AG04449 (cell line): ENCODE measurements at regions of chr17 and their contacts with region 1.

Region 1: GRCh38 chr17:17812211-17813057 is 24.4 kb downstream of the SREBF1 start:
- DNase-seq: no peak
- H3K4me3 ChIP-seq: no peak overlapping the region
- CTCF ChIP-seq: peak; percentile 90

Region 2: GRCh38 chr17:17653343-17653742 is 159.1 kb before region 1 on chr17:
- CTCF ChIA-PET with region 1: no interaction called
- POLR2A ChIA-PET with region 1: no interaction called
- DNase-seq: no peak
- H3K4me3 ChIP-seq: no peak overlapping the region
- CTCF ChIP-seq: no peak

Region 3: DNA sequence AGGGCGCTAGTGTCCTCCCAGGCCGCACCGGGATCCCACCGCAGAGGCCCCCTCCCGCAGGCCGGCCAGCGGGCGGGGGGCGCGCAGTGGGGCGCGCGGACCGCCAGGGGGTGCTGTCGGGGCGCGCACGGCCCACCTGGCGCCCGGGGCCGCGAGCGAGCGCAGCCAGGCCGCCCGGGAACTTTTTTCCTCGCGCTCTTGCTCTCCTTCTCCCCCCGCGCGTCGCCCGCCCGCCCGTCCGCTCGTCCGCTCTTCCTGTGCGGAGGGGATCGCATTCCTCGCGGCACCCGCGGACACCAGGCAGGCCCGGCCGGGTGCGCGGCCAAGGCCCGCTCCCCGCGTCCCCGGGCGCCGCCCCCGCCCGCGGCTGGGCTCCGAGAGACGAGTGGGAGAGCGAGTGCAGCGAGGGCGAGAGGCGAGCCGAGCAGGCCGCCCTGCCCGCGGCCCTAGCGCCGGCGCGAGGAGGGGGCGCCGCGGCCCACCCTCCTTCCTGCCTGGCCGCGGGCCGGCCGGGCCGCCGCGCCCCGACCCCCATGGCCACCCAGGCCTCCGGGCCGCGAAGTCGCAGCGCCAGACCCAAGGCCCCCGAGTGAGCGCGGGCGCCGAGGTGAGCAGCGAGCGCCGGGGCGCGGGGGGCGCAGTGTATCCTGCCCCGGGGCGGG is 131.1 kb before region 1 on chr17 and contains the start of gene RAI1:
- CTCF ChIA-PET with region 1: interaction called, 32 read pairs
- POLR2A ChIA-PET with region 1: interaction called, 6 read pairs
- DNase-seq: no peak
- H3K4me3 ChIP-seq: peak within 1 kb of the TSS; percentile 76
- CTCF ChIP-seq: peak; percentile 50

Region 4: GRCh38 chr17:17800504-17801021 is 11.9 kb before region 1 on chr17:
- CTCF ChIA-PET with region 1: interaction called, 16 read pairs
- POLR2A ChIA-PET with region 1: no interaction called
- DNase-seq: no peak
- H3K4me3 ChIP-seq: no peak overlapping the region
- CTCF ChIP-seq: no peak

Region 5: DNA sequence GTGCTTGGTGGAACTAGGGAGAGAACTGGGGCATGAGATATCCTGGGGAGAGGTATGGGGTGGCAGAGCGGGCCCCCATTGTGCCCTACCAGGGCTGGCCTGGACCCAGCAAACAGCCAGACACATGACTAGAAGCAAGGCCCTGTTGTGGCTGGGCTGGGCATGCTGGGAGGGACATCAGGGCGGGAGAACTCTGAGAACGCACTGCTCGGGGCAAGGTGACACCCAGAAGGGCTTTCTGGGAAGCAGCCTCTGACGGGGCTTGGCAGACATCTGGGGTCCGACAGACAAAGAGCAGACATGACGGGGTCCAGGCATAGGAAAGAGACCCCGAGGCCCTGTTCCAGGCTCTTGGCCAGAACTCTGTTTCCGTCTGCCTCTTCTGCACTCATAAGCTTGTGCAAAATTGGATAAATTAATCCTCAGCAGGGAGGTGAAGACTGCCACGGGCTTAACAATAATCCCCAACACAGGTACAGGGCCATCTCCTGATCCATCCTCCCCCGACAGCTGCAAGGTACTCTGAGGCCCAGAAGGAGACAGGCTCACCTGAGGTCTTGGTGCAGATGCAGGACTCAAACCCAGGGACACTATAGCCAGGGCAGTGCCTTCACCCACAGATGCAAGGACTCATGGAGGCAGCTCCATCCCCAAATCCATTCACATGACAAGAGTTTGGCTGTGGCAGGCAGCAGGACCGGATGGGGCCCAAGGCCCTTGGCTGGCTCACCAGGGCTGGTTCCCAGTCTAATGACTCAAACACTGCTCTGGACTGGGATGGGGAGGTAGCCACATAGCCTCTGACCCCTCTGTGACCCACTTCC is 19.0 kb after region 1 on chr17:
- CTCF ChIA-PET with region 1: interaction called, 21 read pairs
- POLR2A ChIA-PET with region 1: no interaction called
- DNase-seq: no peak
- H3K4me3 ChIP-seq: no peak overlapping the region
- CTCF ChIP-seq: no peak

Region 6: DNA sequence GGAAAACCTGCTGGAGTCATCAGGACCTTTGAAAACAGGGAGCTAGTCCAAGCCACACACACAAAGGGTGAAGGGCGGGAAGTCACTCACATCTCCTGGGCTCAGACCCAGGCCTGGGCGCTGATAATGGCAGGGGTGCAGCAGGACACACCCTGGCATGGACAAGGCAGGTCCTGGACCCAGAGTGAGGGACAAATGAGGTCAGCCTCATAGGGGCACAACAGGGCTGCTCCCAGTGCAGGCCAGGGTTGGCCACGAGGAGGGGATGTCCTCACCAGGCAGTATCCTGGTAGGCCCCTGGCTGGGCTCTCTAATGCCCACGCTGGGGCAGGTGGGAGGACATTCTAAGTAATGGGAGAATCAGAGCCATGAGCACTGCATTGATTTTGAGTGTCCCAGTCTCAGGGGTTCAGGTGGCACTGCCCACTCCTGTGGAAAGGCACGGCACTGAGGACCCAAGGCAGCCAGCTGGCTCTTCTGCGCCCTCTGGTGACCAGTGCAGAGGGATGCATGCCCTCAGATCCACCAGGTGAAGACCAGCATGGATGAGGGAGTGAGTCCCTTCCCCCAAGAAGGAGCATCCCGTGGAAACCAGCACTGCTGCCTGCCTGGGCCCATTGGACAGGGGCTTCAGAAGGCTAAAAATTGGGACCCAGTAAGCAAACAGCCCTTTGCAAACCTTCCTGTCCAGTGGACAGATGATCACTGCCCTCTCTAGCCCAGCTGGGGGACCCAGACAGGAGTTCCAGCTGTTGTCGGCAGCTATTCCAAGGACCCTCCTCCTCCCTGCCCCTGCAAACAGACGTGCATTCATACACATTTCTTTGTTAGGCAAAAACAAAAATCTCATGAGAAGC is 47.7 kb after region 1 on chr17:
- CTCF ChIA-PET with region 1: interaction called, 74 read pairs
- POLR2A ChIA-PET with region 1: no interaction called
- DNase-seq: no peak
- H3K4me3 ChIP-seq: no peak overlapping the region
- CTCF ChIP-seq: peak; percentile 97

Region 7: GRCh38 chr17:18021372-18021771 is 208.9 kb after region 1 on chr17:
- CTCF ChIA-PET with region 1: no interaction called
- POLR2A ChIA-PET with region 1: no interaction called
- DNase-seq: no peak
- H3K4me3 ChIP-seq: no peak overlapping the region
- CTCF ChIP-seq: no peak